A549 (cell line): ENCODE measurements at regions of chr2 and their contacts with region 1.

Region 1: DNA sequence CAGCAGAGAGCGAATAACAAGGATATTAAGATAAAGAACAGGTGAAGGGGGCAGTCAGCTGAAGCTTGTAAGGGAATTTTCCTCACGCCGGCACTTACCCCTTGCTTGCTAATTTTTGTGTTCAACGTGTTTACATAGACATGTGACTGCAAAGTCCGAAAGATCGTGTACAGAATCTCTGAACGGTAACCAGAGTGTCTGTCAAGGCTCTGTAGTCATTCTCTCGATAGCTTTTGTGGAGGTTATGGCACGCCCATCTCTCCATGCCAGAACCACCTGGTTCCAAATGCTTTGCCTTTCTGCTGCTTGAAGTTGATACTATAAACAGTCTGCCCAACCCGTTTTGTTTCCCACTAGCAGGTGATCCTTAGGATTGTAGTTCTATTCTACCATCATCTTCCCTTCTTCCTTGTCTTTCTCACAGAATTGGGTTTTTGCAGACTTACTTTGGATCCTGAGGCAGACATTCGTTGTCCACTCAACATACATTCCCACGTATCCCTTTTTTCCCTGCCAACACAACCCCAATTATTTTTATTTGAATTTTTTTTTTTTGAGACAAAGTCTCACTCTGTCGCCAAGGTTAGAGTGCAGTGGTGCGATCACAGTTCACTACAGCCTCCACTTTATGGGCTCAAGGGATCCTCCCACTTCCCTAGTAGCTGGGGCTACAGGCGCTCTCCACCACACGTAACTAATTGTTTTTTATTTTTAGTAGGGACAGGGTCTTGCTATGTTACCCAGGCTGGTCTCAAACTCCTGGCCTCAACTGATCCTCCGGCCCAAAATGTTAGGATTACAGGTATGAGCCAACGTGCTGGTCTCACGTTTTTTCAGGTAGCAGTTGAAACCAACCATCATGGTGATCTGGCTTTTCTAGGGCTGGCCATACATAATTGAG is 1.3 kb upstream of the USP34 start:
- DNase-seq: peak in 1 of 2 experiments; percentile 39
- ATAC-seq: peak in 1 of 2 experiments; percentile 7; a peak in 2 of 6 replicates
- H3K4me3 ChIP-seq: peak overlapping the region; percentile 72
- H3K27ac ChIP-seq: peak overlapping the region; percentile 93 to 96
- H3K4me1 ChIP-seq: peaks cover 25% of the 10 kb centered on the region; the same call in 2 of the 3 replicates
- CTCF ChIP-seq: no peak
- EP300 ChIP-seq: no peak
- POLR2A ChIP-seq: no peak
- RAD21 ChIP-seq: no peak

Region 2: DNA sequence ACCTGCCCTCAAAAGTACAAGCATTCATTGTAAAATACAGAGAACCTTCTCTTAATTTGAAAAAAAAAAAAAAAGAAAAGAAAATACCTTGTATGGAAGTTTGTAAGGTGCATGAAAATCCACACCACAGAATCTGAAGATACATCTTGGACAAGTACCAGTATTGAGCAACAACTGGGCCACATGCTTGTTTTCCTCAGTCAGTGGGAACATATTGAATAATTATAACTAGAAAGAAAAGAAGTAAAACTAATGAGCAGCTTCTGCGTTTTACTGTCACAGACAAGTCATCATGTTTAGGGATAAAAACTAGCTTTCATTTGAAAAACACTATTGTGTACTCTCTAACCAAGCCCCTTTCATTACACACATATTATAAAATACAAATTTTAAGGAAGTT is 460.5 kb before region 1 on chr2:
- CTCF ChIA-PET with region 1: no interaction called
- POLR2A ChIA-PET with region 1: no interaction called
- DNase-seq: no peak
- ATAC-seq: no peak
- H3K4me3 ChIP-seq: no peak overlapping the region
- H3K27ac ChIP-seq: peak overlapping the region; percentile 36 to 73; a peak in 3 of 6 replicates
- H3K4me1 ChIP-seq: peaks cover 34% of the 10 kb centered on the region
- CTCF ChIP-seq: no peak
- EP300 ChIP-seq: no peak
- POLR2A ChIP-seq: no peak
- RAD21 ChIP-seq: no peak

Region 3: DNA sequence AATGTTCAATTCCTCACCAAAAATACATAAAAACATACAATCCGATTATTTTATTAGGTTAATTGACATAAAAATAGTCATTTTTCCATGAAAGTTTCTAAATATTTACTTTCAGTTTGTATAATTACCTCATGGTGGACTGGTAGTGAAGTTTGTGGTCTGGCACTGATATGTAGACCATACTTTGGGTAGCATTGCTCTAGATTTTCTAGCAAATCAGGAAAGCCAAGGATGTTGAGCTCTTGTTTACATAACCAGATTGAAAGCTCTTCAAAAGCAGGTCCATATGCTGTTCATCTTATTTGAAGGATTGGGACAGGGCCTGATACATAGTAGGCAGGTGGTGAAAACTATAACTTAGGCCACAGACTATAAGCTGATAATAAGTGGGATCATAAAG is 495.1 kb after region 1 on chr2:
- CTCF ChIA-PET with region 1: no interaction called
- POLR2A ChIA-PET with region 1: interaction called, 11 read pairs
- DNase-seq: no peak
- ATAC-seq: no peak
- H3K4me3 ChIP-seq: no peak overlapping the region
- H3K27ac ChIP-seq: no peak overlapping the region
- H3K4me1 ChIP-seq: no peaks in the 10 kb centered on the region
- CTCF ChIP-seq: no peak
- EP300 ChIP-seq: no peak
- POLR2A ChIP-seq: no peak
- RAD21 ChIP-seq: no peak